ENCODE measurements at regions of chr11 and their contacts with region 1.

Region 1: GRCh38 chr11:126318574-126319373 is 14.9 kb downstream of the DCPS start:
- DNase-seq: no peak
- ATAC-seq: peak; percentile 49 to 62
- H3K4me3 ChIP-seq: peak overlapping the region; percentile 9 to 41 (median 32)
- H3K27ac ChIP-seq: peak overlapping the region; percentile 70 to 84 (median 82)
- H3K4me1 ChIP-seq: peaks cover 26 to 28% of the 10 kb centered on the region in 2 donors
- H3K27me3 ChIP-seq: no peaks in the 10 kb centered on the region
- CTCF ChIP-seq: no peak
- POLR2A ChIP-seq: no peak

Region 2: DNA sequence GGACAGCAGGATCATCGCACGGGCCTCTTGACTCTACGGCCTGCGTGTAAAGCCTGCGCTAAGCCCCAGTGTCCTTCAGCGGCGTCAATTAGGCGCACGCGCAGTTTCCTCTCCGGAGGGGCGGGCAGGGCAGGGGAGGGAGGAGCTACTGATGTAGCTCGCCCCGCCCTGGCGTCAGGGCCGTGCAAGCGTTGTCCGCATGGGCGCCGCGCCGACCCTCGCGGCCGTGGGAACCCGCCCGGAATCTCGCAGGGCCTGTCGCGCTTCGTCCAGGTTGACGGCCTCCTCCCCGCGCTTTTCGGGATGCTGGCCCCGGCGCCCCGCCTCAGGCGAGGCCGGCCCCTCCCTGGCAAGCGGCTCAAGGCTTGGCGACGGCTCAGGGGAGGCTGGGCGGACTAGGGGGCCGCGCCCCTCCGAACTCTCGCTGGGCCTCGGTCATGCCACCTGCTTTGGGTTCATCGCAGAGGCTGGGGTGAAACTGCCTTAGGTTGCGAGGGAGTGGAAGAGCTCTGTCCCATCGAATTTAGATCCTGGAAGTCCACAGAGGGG is 97.8 kb after region 1 on chr11:
- in situ Hi-C with region 1: no loop called
- intact Hi-C with region 1: loop called (anchors 1 kb)
- DNase-seq: peak; percentile 67 to 85
- ATAC-seq: peak; percentile 87 to 92
- H3K4me3 ChIP-seq: peak overlapping the region; percentile 59 to 66 (median 64)
- H3K27ac ChIP-seq: peak overlapping the region; percentile 68 to 75 (median 71)
- H3K4me1 ChIP-seq: peaks cover 5 to 23% of the 10 kb centered on the region in 2 donors
- H3K27me3 ChIP-seq: no peaks in the 10 kb centered on the region
- CTCF ChIP-seq: no peak
- POLR2A ChIP-seq: peak; percentile 12 to 22